ENCODE measurements at regions of chr16 and their contacts with region 1.

Region 1: GRCh38 chr16:88856828-88857733 is at the starts of genes GALNS and TRAPPC2L:
- DNase-seq: peak; percentile 97 to 100 (median 98)
- H3K4me3 ChIP-seq: peak within 1 kb of the TSS; percentile 97
- H3K4me3 Mint-ChIP-seq: peak within 1 kb of the TSS; percentile 93 to 100 (median 98)
- H3K27ac ChIP-seq: peak within 1 kb of the TSS; percentile 89
- H3K27ac Mint-ChIP-seq: peak within 1 kb of the TSS; percentile 81 to 100 (median 98)
- H3K4me1 ChIP-seq: peaks cover 33% of the 10 kb centered on the region
- H3K4me1 Mint-ChIP-seq: peaks cover 24 to 48% (median 38%) of the 10 kb centered on the region in 3 donors
- H3K27me3 ChIP-seq: no peaks in the 10 kb centered on the region
- H3K27me3 Mint-ChIP-seq: peaks cover 0 to 2% of the 10 kb centered on the region in 2 donors
- total RNA-seq, gene GALNS: 19.2 to 22.5 TPM
- total RNA-seq, gene TRAPPC2L: 90.0 to 104 TPM

Region 2: DNA sequence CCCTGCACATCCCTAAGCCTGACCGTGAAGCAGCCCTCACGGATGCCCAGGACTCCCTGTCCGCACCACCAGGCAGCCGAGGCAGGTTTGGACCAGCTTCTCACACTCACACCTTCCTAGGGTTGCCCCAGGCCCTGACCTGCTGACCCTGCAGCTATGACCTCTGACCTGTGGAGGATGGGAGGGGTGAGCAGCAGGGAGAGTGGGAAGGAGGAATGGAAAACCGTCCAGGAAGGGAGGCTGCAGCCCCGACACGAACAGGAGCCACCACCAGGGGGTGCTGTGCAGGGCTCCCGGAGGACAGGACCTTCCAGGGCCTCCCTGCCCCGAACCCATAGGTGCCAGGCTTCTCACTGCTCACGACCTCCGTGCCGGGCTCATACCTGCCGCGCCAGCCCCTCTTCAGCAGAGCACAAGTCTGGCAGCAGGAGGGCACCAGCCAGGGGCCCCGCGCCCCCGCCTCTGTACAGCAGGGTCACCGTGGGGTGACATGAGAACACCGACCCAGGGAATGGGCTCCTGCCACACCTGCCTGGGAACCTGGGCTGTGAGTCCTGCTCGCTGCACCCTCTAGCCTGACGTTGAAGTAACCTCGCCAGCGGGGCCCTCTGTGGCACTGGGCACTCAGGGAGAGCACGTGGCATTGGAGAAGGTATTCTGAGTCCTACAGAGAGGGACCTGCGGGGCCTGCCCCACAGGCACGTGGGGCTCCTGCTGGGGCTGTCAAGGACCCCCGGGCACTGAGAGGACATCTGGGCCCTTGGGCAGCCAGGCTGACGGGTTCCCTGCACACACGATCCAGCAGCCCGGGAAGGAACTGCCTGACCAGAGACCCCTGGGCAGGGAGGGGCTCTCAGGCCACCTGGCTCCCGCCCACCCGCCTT is 113.1 kb before region 1 on chr16:
- CTCF ChIA-PET with region 1: interaction called, 14 read pairs
- POLR2A ChIA-PET with region 1: interaction called, 4 read pairs
- DNase-seq: peak; percentile 59 to 83 (median 70)
- H3K4me3 ChIP-seq: no peak overlapping the region
- H3K4me3 Mint-ChIP-seq: peak overlapping the region in 3 of 7 donors; percentile 14 to 39 (median 38)
- H3K27ac ChIP-seq: no peak overlapping the region
- H3K27ac Mint-ChIP-seq: peak overlapping the region in 3 of 8 donors; percentile 22 to 69 (median 23)
- H3K4me1 ChIP-seq: peaks cover 30% of the 10 kb centered on the region
- H3K4me1 Mint-ChIP-seq: peaks cover 20 to 32% (median 20%) of the 10 kb centered on the region in 3 donors
- H3K27me3 ChIP-seq: no peaks in the 10 kb centered on the region
- H3K27me3 Mint-ChIP-seq: no peaks in the 10 kb centered on the region

Region 3: GRCh38 chr16:88811769-88812512 is 45.1 kb before region 1 on chr16 and contains the start of gene APRT:
- CTCF ChIA-PET with region 1: interaction called, 18 read pairs
- POLR2A ChIA-PET with region 1: interaction called, 9 read pairs
- DNase-seq: peak; percentile 94 to 98 (median 96)
- H3K4me3 ChIP-seq: peak within 1 kb of the TSS; percentile 74
- H3K4me3 Mint-ChIP-seq: peak within 1 kb of the TSS; percentile 84 to 99 (median 96)
- H3K27ac ChIP-seq: peak within 1 kb of the TSS; percentile 78
- H3K27ac Mint-ChIP-seq: peak within 1 kb of the TSS; percentile 72 to 98 (median 95)
- H3K4me1 ChIP-seq: peaks cover 14% of the 10 kb centered on the region
- H3K4me1 Mint-ChIP-seq: peaks cover 8 to 35% (median 17%) of the 10 kb centered on the region in 3 donors
- H3K27me3 ChIP-seq: no peaks in the 10 kb centered on the region
- H3K27me3 Mint-ChIP-seq: peaks cover 0 to 4% of the 10 kb centered on the region in 2 donors
- total RNA-seq, gene APRT: 338 to 348 TPM

Region 4: GRCh38 chr16:88886845-88887521 is 29.9 kb after region 1 on chr16:
- CTCF ChIA-PET with region 1: no interaction called
- POLR2A ChIA-PET with region 1: no interaction called
- DNase-seq: no peak
- H3K4me3 ChIP-seq: no peak overlapping the region
- H3K4me3 Mint-ChIP-seq: no peak overlapping the region
- H3K27ac ChIP-seq: no peak overlapping the region
- H3K27ac Mint-ChIP-seq: no peak overlapping the region
- H3K4me1 ChIP-seq: no peaks in the 10 kb centered on the region
- H3K4me1 Mint-ChIP-seq: peaks cover 0 to 2% (median 0%) of the 10 kb centered on the region in 3 donors
- H3K27me3 ChIP-seq: no peaks in the 10 kb centered on the region
- H3K27me3 Mint-ChIP-seq: no peaks in the 10 kb centered on the region

Region 5: DNA sequence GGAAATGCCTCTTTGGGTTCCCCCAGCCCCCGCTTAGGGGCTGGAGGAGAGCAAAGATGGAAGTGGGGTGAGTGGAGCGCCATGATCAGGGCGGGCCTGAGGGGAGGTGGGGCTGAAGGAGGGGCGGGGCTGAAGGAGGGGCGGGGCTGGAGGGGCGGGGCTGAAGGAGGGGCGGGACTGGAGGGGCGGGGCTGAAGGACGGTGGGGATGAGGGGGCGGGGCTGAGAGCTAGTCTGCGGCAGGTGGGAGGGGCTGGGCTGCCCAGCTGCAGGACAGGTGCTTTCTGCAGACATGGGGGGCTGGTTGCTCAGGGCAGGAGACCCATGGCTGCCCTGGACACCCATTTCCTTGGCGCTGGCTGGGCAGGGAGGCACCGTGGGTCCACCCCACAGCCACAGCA is 48.5 kb after region 1 on chr16:
- CTCF ChIA-PET with region 1: no interaction called
- POLR2A ChIA-PET with region 1: no interaction called
- DNase-seq: no peak
- H3K4me3 ChIP-seq: no peak overlapping the region
- H3K4me3 Mint-ChIP-seq: no peak overlapping the region
- H3K27ac ChIP-seq: no peak overlapping the region
- H3K27ac Mint-ChIP-seq: no peak overlapping the region
- H3K4me1 ChIP-seq: no peaks in the 10 kb centered on the region
- H3K4me1 Mint-ChIP-seq: peaks cover 0 to 3% (median 0%) of the 10 kb centered on the region in 3 donors
- H3K27me3 ChIP-seq: no peaks in the 10 kb centered on the region
- H3K27me3 Mint-ChIP-seq: peaks cover 0 to 2% of the 10 kb centered on the region in 2 donors